ENCODE measurements at regions of chr2 and their contacts with region 1.

Region 1: GRCh38 chr2:134290358-134290757 is 36.5 kb downstream of the MGAT5 start:
- DNase-seq: peak in 3 of 5 donors; percentile 23 to 34 (median 30)
- H3K4me3 ChIP-seq: peak overlapping the region in 1 of 2 donors; percentile 16
- H3K4me3 Mint-ChIP-seq: no peak overlapping the region
- H3K27ac ChIP-seq: no peak overlapping the region
- H3K27ac Mint-ChIP-seq: no peak overlapping the region
- H3K4me1 ChIP-seq: peaks cover 97% of the 10 kb centered on the region
- H3K4me1 Mint-ChIP-seq: peaks cover 18 to 43% (median 33%) of the 10 kb centered on the region in 4 donors
- H3K27me3 ChIP-seq: no peaks in the 10 kb centered on the region
- H3K27me3 Mint-ChIP-seq: no peaks in the 10 kb centered on the region

Region 2: DNA sequence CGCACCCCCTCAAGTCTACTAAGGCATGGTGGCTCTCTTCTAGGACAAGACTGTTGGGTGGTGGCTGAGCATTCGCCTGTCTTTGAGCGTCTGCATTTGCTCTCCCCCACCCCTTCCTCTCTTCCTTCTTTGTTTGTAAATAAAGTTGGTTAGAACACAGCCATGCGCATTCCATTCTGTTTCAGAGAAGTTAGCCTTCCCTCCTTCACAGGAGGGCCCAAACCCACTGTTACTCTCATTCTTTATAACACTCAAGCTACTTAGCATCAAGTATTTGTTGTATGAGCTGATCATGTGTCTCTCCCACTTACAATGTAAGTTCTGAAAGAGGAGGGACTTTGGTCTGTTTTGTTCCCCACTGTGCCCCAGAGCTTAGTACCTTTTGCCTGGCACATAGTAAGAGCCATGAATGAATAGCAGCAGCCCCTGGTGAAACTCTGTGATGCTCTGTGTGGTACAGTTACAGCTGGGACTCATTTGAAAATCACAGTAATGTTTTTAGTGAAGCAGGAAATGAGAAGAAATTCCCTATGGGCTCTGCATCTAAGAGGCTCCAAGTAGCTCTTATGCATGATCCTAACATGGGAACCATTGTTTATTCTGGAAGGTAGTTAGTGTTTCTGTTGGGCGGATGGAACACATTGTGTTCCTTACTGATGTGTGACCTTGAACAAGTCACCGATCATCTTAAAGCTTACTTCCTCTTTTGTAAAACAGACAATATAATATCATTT is 28.8 kb before region 1 on chr2:
- CTCF ChIA-PET with region 1: interaction called, 3 read pairs
- POLR2A ChIA-PET with region 1: interaction called, 11 read pairs
- intact Hi-C with region 1: loop called (anchors 2 kb)
- DNase-seq: no peak
- H3K4me3 ChIP-seq: no peak overlapping the region
- H3K4me3 Mint-ChIP-seq: peak overlapping the region; percentile 2 to 59 (median 44)
- H3K27ac ChIP-seq: no peak overlapping the region
- H3K27ac Mint-ChIP-seq: peak overlapping the region; percentile 48 to 89 (median 86)
- H3K4me1 ChIP-seq: peaks cover 70% of the 10 kb centered on the region
- H3K4me1 Mint-ChIP-seq: peaks cover 67 to 80% (median 68%) of the 10 kb centered on the region in 4 donors
- H3K27me3 ChIP-seq: no peaks in the 10 kb centered on the region
- H3K27me3 Mint-ChIP-seq: no peaks in the 10 kb centered on the region

Region 3: GRCh38 chr2:134301099-134301927 is 11.0 kb after region 1 on chr2:
- CTCF ChIA-PET with region 1: interaction called, 5 read pairs
- POLR2A ChIA-PET with region 1: interaction called, 15 read pairs
- intact Hi-C with region 1: no loop called
- DNase-seq: no peak
- H3K4me3 ChIP-seq: no peak overlapping the region
- H3K4me3 Mint-ChIP-seq: peak overlapping the region in 4 of 8 donors; percentile 4 to 64 (median 12)
- H3K27ac ChIP-seq: no peak overlapping the region
- H3K27ac Mint-ChIP-seq: peak overlapping the region in 5 of 7 donors; percentile 18 to 84 (median 65)
- H3K4me1 ChIP-seq: peaks cover 65% of the 10 kb centered on the region
- H3K4me1 Mint-ChIP-seq: peaks cover 52 to 86% (median 72%) of the 10 kb centered on the region in 4 donors
- H3K27me3 ChIP-seq: no peaks in the 10 kb centered on the region
- H3K27me3 Mint-ChIP-seq: no peaks in the 10 kb centered on the region

Region 4: DNA sequence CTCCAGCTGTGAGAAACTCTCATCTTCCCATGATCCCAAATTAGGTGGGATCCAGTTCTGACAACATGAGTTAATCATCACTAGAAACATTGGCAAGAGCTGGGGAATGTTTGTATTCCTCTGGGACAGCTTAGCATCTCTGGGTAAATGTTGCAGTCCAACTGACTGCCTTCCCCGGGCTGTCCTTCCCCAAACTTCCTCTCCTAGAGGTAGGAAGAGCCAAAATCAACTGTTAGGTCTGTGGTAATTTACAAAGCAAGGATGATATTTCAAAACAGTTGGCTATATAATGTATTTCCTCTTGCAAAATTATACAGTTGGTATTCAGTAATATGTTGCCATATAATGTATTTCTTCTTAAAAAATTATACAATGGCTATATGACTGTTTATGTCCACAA is 112.1 kb after region 1 on chr2:
- CTCF ChIA-PET with region 1: no interaction called
- POLR2A ChIA-PET with region 1: no interaction called
- intact Hi-C with region 1: no loop called
- DNase-seq: no peak
- H3K4me3 ChIP-seq: no peak overlapping the region
- H3K4me3 Mint-ChIP-seq: no peak overlapping the region
- H3K27ac ChIP-seq: no peak overlapping the region
- H3K27ac Mint-ChIP-seq: peak overlapping the region in 5 of 7 donors; percentile 32 to 68 (median 67)
- H3K4me1 ChIP-seq: peaks cover 1% of the 10 kb centered on the region
- H3K4me1 Mint-ChIP-seq: peaks cover 7 to 35% (median 19%) of the 10 kb centered on the region in 4 donors
- H3K27me3 ChIP-seq: no peaks in the 10 kb centered on the region
- H3K27me3 Mint-ChIP-seq: no peaks in the 10 kb centered on the region

Measured in CD4-positive, alpha-beta memory T cell (primary cell).